Dorsolateral prefrontal cortex (tissue), 120 donors: ENCODE measurements at regions of chr14 and their contacts with region 1.

Region 1: GRCh38 chr14:65373679-65374039 is 38.9 kb upstream of the FUT8 start:
- DNase-seq: peak in 9 of 10 donors; percentile 41 to 80 (median 65)
- H3K4me3 ChIP-seq: peak overlapping the region in 48 of 59 donors; percentile 4 to 66 (median 38)
- H3K27ac ChIP-seq: peak overlapping the region in 57 of 59 donors; percentile 58 to 97 (median 86)
- H3K27me3 ChIP-seq: peaks cover 0 to 5% (median 0%) of the 10 kb centered on the region in 45 donors
- CTCF ChIP-seq: peak in 50 of 56 donors; percentile 24 to 75 (median 48)

Region 2: GRCh38 chr14:63918411-63918810 is 1455.2 kb before region 1 on chr14:
- intact Hi-C with region 1: no loop called
- DNase-seq: no peak
- H3K4me3 ChIP-seq: no peak overlapping the region
- H3K27ac ChIP-seq: no peak overlapping the region
- H3K27me3 ChIP-seq: peaks cover 0 to 4% (median 0%) of the 10 kb centered on the region in 45 donors
- CTCF ChIP-seq: no peak

Region 3: DNA sequence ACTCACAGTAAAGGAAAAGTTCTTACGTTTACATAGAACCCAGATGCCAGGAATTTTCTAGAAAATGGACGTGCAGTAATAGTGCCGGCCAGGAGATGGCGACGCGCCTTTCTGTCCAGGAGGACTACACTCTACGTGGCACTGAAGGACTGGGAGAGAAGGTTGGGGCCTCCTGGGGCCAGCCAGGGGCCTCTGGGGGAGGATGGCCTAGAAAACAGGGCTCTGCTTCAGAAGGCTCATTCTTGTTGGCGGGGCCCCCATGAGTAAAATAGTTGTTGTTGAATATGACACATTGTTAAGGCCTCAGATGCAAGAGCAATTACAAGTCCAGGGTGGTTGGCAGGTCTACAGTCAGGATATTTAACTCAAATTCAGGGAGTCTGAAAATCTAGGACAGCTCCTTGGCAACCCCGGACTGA is 151.2 kb before region 1 on chr14:
- intact Hi-C with region 1: loop called in 1 of 2 experiments (anchors 10 kb)
- DNase-seq: peak in 7 of 10 donors; percentile 48 to 72 (median 64)
- H3K4me3 ChIP-seq: no peak overlapping the region
- H3K27ac ChIP-seq: peak overlapping the region in 58 of 59 donors; percentile 6 to 100 (median 98)
- H3K27me3 ChIP-seq: no peaks in the 10 kb centered on the region
- CTCF ChIP-seq: peak; percentile 41 to 83 (median 69)

Region 4: DNA sequence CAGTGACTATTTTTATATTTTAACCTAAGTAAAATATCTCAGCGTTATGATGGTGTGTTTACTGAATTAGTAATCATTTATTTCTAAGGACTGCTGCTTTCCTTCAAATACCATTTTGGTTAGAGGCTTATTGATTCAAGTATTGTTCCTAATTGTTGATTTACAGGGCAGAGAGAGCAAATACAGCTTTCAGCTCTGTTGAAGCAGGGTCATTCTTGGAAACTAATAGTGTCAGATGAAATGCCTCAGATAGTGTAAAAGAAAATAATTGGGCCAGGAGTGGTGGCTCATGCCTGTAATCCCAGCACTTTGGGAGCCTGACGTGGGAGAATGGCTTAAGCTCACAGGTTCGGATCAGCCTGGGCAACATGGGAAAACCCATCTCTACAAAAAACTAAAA is 288.2 kb after region 1 on chr14:
- intact Hi-C with region 1: no loop called
- DNase-seq: no peak
- H3K4me3 ChIP-seq: no peak overlapping the region
- H3K27ac ChIP-seq: no peak overlapping the region
- H3K27me3 ChIP-seq: no peaks in the 10 kb centered on the region
- CTCF ChIP-seq: no peak